Naive thymus-derived CD4-positive, alpha-beta T cell (primary cell): ENCODE measurements at regions of chr19 and their contacts with region 1.

Region 1: DNA sequence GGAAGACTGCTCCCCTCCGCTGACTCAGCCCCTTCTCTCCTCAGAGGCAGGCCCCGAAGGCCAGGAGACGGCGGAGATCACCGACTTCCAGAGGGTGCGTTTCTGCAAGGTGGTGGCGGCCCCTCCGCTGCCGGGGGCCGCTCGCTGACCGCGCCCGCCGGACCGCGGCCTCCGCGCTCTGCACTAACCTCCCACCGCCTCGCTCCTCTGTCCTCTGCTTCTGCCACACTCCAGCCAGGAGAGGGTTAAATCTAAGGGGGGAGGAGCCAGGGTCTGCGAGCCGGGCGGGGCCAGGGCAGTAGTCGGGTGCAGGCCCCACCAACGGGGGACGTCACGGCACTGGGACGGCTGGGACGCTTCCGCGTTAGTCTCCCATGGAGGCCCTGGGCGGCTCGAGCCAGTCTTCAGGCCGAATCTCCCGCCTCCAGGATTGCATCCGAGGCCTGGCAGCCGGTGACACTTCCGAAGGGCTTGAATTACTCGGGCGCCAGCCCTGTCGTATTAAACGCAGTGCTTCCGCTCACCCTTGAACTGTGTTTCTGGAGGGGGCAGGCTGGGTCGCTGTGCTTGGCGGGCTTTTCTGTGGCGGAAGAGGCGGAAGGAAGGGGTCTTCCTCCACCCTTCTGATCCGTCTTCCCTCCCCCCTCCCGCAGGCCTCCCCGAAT is 1.2 kb upstream of the INAFM1 start:
- DNase-seq: peak; percentile 81 to 91 (median 88)
- ATAC-seq: peak; percentile 74
- H3K4me3 ChIP-seq: peak overlapping the region; percentile 100
- H3K4me3 Mint-ChIP-seq: peak overlapping the region; percentile 83 to 99 (median 95)
- H3K27ac ChIP-seq: peak overlapping the region; percentile 95
- H3K27ac Mint-ChIP-seq: peak overlapping the region; percentile 93 to 98 (median 97)
- H3K4me1 ChIP-seq: peaks cover 3 to 14% of the 10 kb centered on the region in 2 donors
- H3K4me1 Mint-ChIP-seq: peaks cover 20 to 28% (median 27%) of the 10 kb centered on the region in 7 donors
- H3K27me3 ChIP-seq: no peaks in the 10 kb centered on the region
- H3K27me3 Mint-ChIP-seq: no peaks in the 10 kb centered on the region

Region 2: DNA sequence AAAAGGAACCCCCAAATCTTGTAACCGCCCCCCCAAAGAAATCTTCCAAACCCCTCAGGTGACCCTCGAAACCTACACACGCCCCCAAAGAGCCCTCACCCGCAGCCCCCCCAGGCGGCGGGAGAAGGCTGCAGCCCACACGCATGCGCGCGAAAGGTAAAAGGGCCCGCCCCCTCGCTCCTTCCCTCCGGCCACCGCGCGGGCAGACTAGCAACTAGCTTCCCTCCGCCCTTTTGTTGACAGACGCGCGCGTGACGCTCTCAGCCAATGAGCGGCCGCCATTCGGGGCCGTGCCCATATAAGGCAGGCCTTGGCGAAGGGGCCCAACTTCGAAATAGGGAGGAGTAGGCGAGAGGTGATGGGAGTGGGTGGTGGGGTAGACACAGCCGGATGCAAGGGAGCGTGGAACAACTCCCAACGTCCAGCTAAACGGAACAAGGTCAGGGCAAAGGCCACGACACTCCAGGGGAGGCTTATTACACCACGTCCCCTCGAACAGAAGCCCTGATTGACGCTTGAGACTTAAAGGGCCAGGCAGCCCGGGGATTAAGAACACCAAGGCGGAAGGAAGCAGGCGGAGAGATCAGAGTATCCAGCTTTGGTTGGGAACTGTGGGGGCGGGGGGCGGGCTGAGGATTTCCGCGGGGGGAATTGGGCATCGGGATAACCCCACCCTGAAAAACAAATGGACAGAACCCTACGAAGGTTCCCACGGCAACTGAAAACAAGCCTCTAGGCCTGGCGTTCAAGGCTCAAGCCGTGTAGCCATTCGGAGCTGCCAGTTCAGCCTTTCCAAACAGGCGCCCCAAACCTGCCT is 1556.1 kb before region 1 on chr19:
- CTCF ChIA-PET with region 1: no interaction called
- POLR2A ChIA-PET with region 1: no interaction called
- intact Hi-C with region 1: loop called in 1 of 2 experiments (anchors 10 kb)
- DNase-seq: peak; percentile 92 to 99 (median 98)
- ATAC-seq: peak; percentile 98
- H3K4me3 ChIP-seq: peak overlapping the region; percentile 80
- H3K4me3 Mint-ChIP-seq: peak overlapping the region; percentile 89 to 99 (median 95)
- H3K27ac ChIP-seq: peak overlapping the region; percentile 89
- H3K27ac Mint-ChIP-seq: peak overlapping the region; percentile 88 to 97 (median 96)
- H3K4me1 ChIP-seq: peaks cover 17 to 26% of the 10 kb centered on the region in 2 donors
- H3K4me1 Mint-ChIP-seq: peaks cover 26 to 55% (median 38%) of the 10 kb centered on the region in 7 donors
- H3K27me3 ChIP-seq: no peaks in the 10 kb centered on the region
- H3K27me3 Mint-ChIP-seq: no peaks in the 10 kb centered on the region

Region 3: GRCh38 chr19:46661020-46661731 is 612.3 kb before region 1 on chr19 and contains the start of gene DACT3:
- CTCF ChIA-PET with region 1: no interaction called
- POLR2A ChIA-PET with region 1: no interaction called
- intact Hi-C with region 1: loop called in 1 of 2 experiments (anchors 1 kb)
- DNase-seq: peak; percentile 98 to 100 (median 99)
- ATAC-seq: peak; percentile 92
- H3K4me3 ChIP-seq: peak within 1 kb of the TSS; percentile 71
- H3K4me3 Mint-ChIP-seq: peak within 1 kb of the TSS; percentile 80 to 93 (median 86)
- H3K27ac ChIP-seq: peak within 1 kb of the TSS; percentile 65
- H3K27ac Mint-ChIP-seq: peak within 1 kb of the TSS; percentile 76 to 96 (median 91)
- H3K4me1 ChIP-seq: peaks cover 14 to 20% of the 10 kb centered on the region in 2 donors
- H3K4me1 Mint-ChIP-seq: peaks cover 7 to 26% (median 20%) of the 10 kb centered on the region in 7 donors
- H3K27me3 ChIP-seq: peaks cover 6 to 10% of the 10 kb centered on the region in 2 donors
- H3K27me3 Mint-ChIP-seq: peaks cover 9 to 42% (median 18%) of the 10 kb centered on the region in 5 donors
- total RNA-seq, gene DACT3: 0.11 to 1.3 (median 0.34) TPM in 4 of 5 experiments, not detected in the other

Region 4: DNA sequence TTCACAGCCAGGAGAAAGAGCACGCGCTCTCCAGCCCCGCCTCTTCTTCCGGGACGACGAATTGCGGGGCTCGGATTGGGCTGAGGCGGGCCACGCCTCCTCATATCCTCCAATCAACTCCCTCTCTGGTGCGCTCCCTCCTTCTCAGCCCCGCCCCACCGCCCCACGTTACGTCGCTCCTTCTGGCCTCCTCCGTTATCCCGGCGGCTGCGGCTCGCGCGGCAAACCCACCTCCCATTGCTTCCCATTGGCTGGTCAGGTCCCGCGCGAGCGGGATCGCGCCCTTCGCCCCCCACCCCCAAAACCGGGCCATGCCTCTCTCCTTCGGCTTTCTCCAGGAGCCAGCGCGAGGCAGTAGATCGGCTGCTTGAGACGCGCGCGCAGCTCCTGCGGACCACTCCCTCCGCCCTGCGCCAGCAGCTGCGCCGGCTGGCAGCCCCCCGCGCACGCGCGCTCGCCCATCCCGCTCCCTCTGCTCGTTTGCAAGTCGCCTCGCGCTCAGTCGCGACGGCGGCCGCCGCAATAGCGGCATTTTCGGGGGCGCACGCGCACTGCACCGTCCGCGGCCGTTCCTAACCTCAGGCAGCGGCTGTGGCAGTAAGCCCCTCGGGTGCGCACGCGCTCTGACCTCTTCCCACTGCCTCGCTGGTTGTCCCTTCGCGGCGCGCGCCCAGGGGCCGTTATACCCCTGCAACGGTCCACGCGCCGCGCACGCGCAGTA is 413.2 kb before region 1 on chr19:
- CTCF ChIA-PET with region 1: no interaction called
- POLR2A ChIA-PET with region 1: interaction called, 3 read pairs
- intact Hi-C with region 1: loop called in 1 of 2 experiments (anchors 1 kb)
- DNase-seq: peak; percentile 84 to 95 (median 94)
- ATAC-seq: peak; percentile 91
- H3K4me3 ChIP-seq: peak overlapping the region; percentile 92
- H3K4me3 Mint-ChIP-seq: peak overlapping the region in 9 of 10 donors; percentile 70 to 97 (median 92)
- H3K27ac ChIP-seq: peak overlapping the region; percentile 94
- H3K27ac Mint-ChIP-seq: peak overlapping the region; percentile 68 to 98 (median 92)
- H3K4me1 ChIP-seq: peaks cover 24 to 30% of the 10 kb centered on the region in 2 donors
- H3K4me1 Mint-ChIP-seq: peaks cover 13 to 25% (median 19%) of the 10 kb centered on the region in 7 donors
- H3K27me3 ChIP-seq: no peaks in the 10 kb centered on the region
- H3K27me3 Mint-ChIP-seq: no peaks in the 10 kb centered on the region

Region 5: DNA sequence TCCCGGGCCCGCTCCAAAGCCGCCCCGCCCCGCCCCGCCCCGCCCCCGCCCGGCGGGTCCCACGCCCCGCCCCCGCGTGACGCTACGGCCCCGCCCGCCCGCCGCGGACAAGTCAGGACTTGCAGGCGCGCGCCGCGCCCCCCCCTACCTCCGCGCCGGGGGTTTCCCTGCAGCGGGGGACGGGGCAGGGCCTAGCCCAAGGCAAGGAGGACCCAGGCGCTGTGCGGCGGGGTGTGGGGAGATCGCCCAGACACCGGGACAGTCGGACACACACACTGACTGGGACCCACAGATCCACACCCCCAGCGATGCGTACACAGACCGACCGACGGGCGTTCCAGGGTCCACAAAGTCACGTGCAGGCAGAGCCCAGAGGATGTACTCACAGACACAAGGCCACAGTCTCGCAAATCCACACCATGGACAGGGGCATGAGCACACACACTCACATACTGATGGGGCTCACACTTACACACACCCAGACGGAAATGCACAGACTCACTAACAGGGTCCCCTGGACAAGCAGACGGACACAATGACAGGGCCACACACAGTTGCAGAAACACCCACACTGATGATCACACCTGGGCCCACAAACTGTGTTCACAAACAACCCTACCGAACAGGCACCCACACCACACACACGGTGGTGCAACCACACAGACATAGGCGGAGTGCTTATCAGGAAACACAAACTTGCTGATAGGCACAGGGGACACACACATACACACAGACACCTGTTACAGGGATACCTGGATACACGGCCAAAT is 42.0 kb before region 1 on chr19:
- CTCF ChIA-PET with region 1: no interaction called
- POLR2A ChIA-PET with region 1: interaction called, 6 read pairs
- intact Hi-C with region 1: loop called (anchors 1 kb)
- DNase-seq: peak; percentile 77 to 94 (median 86)
- ATAC-seq: peak; percentile 78
- H3K4me3 ChIP-seq: peak overlapping the region; percentile 54
- H3K4me3 Mint-ChIP-seq: peak overlapping the region in 9 of 10 donors; percentile 69 to 88 (median 81)
- H3K27ac ChIP-seq: peak overlapping the region; percentile 80
- H3K27ac Mint-ChIP-seq: peak overlapping the region; percentile 20 to 92 (median 90)
- H3K4me1 ChIP-seq: peaks cover 36 to 45% of the 10 kb centered on the region in 2 donors
- H3K4me1 Mint-ChIP-seq: peaks cover 20 to 29% (median 24%) of the 10 kb centered on the region in 7 donors
- H3K27me3 ChIP-seq: no peaks in the 10 kb centered on the region
- H3K27me3 Mint-ChIP-seq: peaks cover 0 to 4% (median 0%) of the 10 kb centered on the region in 5 donors

Region 6: GRCh38 chr19:47348819-47349795 is 75.7 kb after region 1 on chr19 and contains the start of gene DHX34:
- CTCF ChIA-PET with region 1: interaction called, 6 read pairs
- POLR2A ChIA-PET with region 1: interaction called, 4 read pairs
- intact Hi-C with region 1: loop called (anchors 1 to 2 kb)
- DNase-seq: peak; percentile 97 to 100 (median 99)
- ATAC-seq: peak; percentile 100
- H3K4me3 ChIP-seq: peak within 1 kb of the TSS; percentile 92
- H3K4me3 Mint-ChIP-seq: peak within 1 kb of the TSS; percentile 91 to 100 (median 97)
- H3K27ac ChIP-seq: peak within 1 kb of the TSS; percentile 83
- H3K27ac Mint-ChIP-seq: peak within 1 kb of the TSS; percentile 88 to 97 (median 95)
- H3K4me1 ChIP-seq: peaks cover 0 to 12% of the 10 kb centered on the region in 2 donors
- H3K4me1 Mint-ChIP-seq: peaks cover 19 to 46% (median 44%) of the 10 kb centered on the region in 7 donors
- H3K27me3 ChIP-seq: no peaks in the 10 kb centered on the region
- H3K27me3 Mint-ChIP-seq: peaks cover 0 to 3% (median 0%) of the 10 kb centered on the region in 5 donors
- total RNA-seq, gene DHX34: 15.6 to 31.6 (median 29.5) TPM

Region 7: DNA sequence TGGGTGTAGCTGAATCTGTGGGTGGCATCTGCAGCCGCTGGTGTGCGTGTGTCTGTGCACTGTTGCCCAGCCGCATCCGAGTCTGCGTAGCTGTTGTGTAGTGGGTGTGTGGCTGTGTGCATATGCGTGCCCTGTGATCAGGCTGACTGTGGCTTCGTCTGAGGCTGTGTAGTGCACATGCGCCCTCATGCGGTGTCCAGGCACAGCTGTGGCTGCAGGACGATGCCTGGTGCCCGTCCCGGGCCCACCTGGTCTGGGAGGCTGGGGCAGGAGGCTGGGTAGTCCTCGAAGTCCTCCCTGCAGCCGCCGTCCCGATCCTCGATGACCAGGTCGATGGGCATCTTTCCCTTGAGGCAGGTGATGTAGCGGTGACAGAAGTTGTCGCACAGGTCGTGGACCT is 141.0 kb after region 1 on chr19:
- CTCF ChIA-PET with region 1: no interaction called
- POLR2A ChIA-PET with region 1: no interaction called
- intact Hi-C with region 1: no loop called
- DNase-seq: no peak
- ATAC-seq: no peak
- H3K4me3 ChIP-seq: no peak overlapping the region
- H3K4me3 Mint-ChIP-seq: no peak overlapping the region
- H3K27ac ChIP-seq: no peak overlapping the region
- H3K27ac Mint-ChIP-seq: no peak overlapping the region
- H3K4me1 ChIP-seq: peaks cover 0 to 11% of the 10 kb centered on the region in 2 donors
- H3K4me1 Mint-ChIP-seq: peaks cover 10 to 18% (median 15%) of the 10 kb centered on the region in 7 donors
- H3K27me3 ChIP-seq: peaks cover 0 to 1% of the 10 kb centered on the region in 2 donors
- H3K27me3 Mint-ChIP-seq: peaks cover 37 to 58% (median 45%) of the 10 kb centered on the region in 5 donors

Region 8: DNA sequence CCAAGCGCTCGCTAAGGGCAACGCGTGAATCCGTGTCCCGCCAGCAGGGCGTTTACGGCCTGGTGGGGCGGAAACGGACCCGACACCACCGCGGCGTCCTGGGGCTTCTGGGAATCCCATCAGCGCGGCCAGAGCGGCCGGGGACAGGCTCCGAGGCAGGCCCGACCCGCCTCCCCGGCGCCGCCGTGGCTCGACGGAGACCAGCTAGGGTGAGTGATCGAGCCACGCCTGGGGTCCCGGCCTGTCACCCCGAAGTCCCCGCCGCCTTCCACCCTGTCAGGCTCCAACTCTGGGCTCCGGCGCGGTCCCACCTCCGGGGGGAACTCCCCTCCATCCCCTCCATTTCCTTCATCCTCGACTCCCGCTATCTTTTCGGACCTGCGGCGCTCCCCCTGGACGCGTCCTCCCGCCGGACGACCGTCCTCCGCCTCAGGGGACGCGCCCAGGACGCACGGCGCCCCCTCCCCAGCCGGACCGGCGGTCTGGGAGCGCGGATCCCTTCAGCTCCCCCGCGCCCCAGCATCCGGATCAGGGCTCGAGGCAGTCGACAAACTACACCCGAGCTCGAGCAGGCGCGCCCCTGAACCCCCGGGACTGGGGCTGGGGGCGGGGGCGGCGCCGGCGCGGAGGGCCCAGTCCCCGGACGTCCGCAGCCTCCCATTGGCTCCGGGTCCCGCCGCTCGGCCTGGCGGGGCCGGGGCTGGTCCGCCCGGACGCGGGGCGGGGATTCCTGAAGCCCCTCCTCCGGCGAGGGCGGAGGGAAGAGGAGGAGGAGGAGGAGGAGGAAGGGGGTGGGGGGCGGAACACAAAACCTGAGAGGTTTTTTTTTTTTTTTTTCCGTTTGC is 334.9 kb after region 1 on chr19:
- CTCF ChIA-PET with region 1: no interaction called
- POLR2A ChIA-PET with region 1: no interaction called
- intact Hi-C with region 1: loop called (anchors 1 to 5 kb)
- DNase-seq: peak; percentile 91 to 99 (median 96)
- ATAC-seq: peak; percentile 96
- H3K4me3 ChIP-seq: peak overlapping the region; percentile 79
- H3K4me3 Mint-ChIP-seq: peak overlapping the region; percentile 70 to 95 (median 86)
- H3K27ac ChIP-seq: peak overlapping the region; percentile 96
- H3K27ac Mint-ChIP-seq: peak overlapping the region; percentile 61 to 92 (median 88)
- H3K4me1 ChIP-seq: peaks cover 16 to 22% of the 10 kb centered on the region in 2 donors
- H3K4me1 Mint-ChIP-seq: peaks cover 12 to 36% (median 28%) of the 10 kb centered on the region in 7 donors
- H3K27me3 ChIP-seq: no peaks in the 10 kb centered on the region
- H3K27me3 Mint-ChIP-seq: peaks cover 0 to 2% (median 0%) of the 10 kb centered on the region in 5 donors